Prostate gland (tissue), 2 donors: ENCODE measurements at regions of chr2 and their contacts with region 1.

Region 1: DNA sequence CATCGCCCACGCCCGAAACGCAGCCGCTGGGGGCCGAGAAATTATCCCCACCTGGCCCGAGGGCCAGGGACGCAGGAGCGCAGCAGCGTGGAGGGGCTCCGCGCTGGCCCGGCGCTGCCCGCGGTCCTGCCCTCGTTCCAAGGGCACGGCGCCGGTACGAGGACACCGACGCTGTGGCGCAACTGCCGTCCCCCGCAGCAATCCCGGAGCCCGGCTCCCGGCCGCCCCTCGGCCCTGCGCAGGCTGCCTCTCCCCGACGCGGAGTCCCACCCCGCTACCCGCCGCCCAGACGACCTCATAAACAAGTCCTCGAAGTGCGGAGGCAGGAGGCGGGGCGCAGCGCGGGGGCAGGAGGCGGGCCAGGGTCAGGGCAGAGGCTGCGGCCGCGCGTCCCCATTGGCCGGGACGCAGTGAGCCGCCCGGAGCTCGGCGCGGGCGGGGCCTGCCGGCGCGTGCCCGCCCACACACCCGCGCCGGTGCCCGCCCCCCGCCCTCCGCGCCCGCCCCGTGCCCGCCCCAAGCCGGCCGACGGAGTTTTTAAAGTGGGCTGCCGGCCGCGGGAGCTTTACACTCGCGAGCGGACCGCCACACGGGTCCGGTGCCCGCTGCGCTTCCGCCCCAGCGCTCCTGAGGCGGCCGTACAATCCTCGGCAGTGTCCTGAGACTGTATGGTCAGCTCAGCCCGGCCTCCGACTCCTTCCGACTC is at the start of gene EPAS1:
- DNase-seq: peak; percentile 86
- H3K4me3 ChIP-seq: peak within 1 kb of the TSS; percentile 65 to 67
- H3K27ac ChIP-seq: peak within 1 kb of the TSS; percentile 88 to 93
- H3K4me1 ChIP-seq: no peaks in the 10 kb centered on the region
- H3K27me3 ChIP-seq: no peaks in the 10 kb centered on the region
- CTCF ChIP-seq: no peak
- POLR2A ChIP-seq: peak; percentile 92
- total RNA-seq, gene EPAS1: 109 to 356 TPM

Region 2: GRCh38 chr2:46010925-46011490 is 286.0 kb before region 1 on chr2:
- intact Hi-C with region 1: loop called (anchors 5 kb)
- DNase-seq: no peak
- H3K4me3 ChIP-seq: no peak overlapping the region
- H3K27ac ChIP-seq: no peak overlapping the region
- H3K4me1 ChIP-seq: no peaks in the 10 kb centered on the region
- H3K27me3 ChIP-seq: no peaks in the 10 kb centered on the region
- CTCF ChIP-seq: peak; percentile 53 to 91 (median 78)
- POLR2A ChIP-seq: no peak

Region 3: GRCh38 chr2:46062637-46063412 is 234.2 kb before region 1 on chr2:
- intact Hi-C with region 1: loop called (anchors 5 kb)
- DNase-seq: peak; percentile 73
- H3K4me3 ChIP-seq: no peak overlapping the region
- H3K27ac ChIP-seq: no peak overlapping the region
- H3K4me1 ChIP-seq: peaks cover 12% of the 10 kb centered on the region
- H3K27me3 ChIP-seq: no peaks in the 10 kb centered on the region
- CTCF ChIP-seq: peak; percentile 46 to 85 (median 76)
- POLR2A ChIP-seq: no peak

Region 4: DNA sequence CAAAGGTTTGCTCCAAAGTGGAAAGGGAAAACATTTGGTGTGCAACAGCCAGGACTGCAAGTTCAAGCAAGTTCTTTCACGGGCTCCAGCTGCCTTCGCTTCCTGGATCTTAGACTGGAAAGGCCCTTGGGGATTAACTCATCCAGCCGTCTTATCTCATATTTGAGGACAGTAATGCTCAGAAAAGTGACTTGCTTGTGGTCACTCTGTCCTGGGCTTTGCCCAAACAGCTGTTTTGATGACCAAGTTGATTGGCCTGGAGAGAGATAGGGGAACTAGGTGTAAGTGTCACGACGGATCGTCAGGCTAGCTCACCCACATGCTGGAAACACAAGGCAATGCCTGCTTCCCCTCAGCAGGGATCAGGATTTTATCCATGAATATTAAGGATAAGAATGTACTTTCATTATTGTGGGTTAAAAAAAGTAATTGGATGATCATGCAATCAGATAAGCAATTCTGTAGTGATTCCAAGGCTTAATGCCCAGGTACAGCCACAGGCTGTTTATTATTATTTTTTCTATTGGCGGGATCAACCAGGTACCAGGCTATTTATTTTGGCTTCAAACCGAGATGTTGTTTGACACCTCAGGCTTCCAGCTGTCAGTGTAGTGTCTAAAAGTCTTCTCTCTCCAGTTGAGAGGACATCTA is 162.3 kb before region 1 on chr2:
- intact Hi-C with region 1: loop called (anchors 5 kb)
- DNase-seq: peak; percentile 68
- H3K4me3 ChIP-seq: no peak overlapping the region
- H3K27ac ChIP-seq: peak overlapping the region; percentile 56 to 71
- H3K4me1 ChIP-seq: peaks cover 9% of the 10 kb centered on the region
- H3K27me3 ChIP-seq: no peaks in the 10 kb centered on the region
- CTCF ChIP-seq: no peak
- POLR2A ChIP-seq: no peak

Region 5: GRCh38 chr2:46241344-46241743 is 55.6 kb before region 1 on chr2:
- intact Hi-C with region 1: no loop called
- DNase-seq: no peak
- H3K4me3 ChIP-seq: no peak overlapping the region
- H3K27ac ChIP-seq: no peak overlapping the region
- H3K4me1 ChIP-seq: no peaks in the 10 kb centered on the region
- H3K27me3 ChIP-seq: no peaks in the 10 kb centered on the region
- CTCF ChIP-seq: no peak
- POLR2A ChIP-seq: no peak

Region 6: DNA sequence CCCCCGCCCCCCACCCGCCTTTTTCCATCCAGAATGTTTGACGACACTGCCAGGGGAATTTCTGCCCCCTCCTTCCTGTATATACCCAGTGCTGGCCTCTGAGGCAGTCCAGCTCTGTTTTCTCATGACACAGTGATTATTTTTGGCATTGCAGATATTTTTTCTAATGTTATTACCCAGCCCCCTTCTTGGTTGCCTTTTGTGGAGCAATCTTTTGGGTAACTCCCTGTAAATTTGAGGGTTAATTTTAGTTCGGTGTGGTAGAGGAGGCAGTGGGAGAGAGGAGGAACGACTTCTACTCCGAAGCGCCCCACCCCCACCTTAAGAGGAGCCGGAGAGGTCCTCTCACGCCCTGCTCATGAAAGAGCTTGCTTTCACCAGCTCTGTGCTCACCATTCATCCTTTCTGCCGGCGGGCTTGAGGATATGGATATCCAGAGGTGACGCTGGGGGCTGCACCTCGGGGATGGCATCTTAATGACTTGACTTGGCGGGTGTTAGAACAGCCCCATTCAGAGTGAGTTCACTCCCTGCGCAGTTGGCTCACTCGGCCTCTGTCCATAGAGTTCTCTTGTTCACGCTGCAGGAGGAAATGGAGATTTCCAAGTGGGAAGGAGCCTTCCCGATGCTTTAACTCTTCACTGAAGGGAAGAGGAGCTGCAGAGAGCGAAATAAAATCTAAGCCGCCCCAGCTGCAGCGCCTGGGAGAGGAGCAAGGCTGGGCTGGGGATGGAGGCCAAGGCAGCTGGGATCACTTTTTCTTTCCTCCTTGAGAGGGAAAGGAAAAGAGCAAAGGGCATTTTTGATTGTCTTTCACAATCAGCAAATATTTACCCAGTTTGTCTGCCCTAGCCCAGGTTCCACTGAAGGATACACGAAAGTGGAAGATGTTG is 38.6 kb after region 1 on chr2:
- intact Hi-C with region 1: loop called (anchors 5 kb)
- DNase-seq: peak; percentile 17
- H3K4me3 ChIP-seq: peak overlapping the region in 1 of 2 donors; percentile 13
- H3K27ac ChIP-seq: peak overlapping the region; percentile 69 to 77
- H3K4me1 ChIP-seq: peaks cover 14% of the 10 kb centered on the region
- H3K27me3 ChIP-seq: no peaks in the 10 kb centered on the region
- CTCF ChIP-seq: no peak
- POLR2A ChIP-seq: no peak

Region 7: DNA sequence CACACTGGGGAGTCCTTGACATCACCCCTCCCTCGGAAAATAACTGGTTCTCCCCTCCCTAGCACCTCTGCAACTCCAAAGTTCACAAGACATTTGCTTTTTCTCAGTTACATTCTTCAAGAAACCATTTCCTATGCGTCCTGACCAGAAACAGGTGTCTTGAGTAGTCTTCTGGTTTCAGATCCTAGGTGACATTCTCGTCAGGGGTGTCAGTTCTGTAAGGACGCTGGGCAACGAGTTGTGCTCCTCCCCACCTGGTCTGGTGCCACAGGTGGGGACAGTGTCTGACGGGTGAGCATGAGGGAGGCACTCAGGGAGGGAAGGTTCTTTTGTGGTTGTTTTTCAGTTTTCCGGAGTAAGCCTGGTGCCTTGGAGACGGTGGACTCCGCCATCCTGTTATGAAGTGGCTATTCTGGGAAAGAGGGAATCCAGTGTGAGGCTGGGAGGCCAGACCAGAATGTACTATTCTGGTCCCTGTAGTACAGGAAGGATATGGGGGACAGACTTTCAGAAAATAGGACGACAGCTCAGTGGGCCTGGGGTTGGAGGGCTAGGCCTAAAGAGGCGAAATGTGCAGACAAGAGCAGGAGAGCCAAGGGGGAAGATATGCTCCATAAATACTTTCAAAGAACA is 50.8 kb after region 1 on chr2:
- intact Hi-C with region 1: loop called (anchors 5 kb)
- DNase-seq: no peak
- H3K4me3 ChIP-seq: no peak overlapping the region
- H3K27ac ChIP-seq: no peak overlapping the region
- H3K4me1 ChIP-seq: no peaks in the 10 kb centered on the region
- H3K27me3 ChIP-seq: no peaks in the 10 kb centered on the region
- CTCF ChIP-seq: no peak
- POLR2A ChIP-seq: no peak

Region 8: DNA sequence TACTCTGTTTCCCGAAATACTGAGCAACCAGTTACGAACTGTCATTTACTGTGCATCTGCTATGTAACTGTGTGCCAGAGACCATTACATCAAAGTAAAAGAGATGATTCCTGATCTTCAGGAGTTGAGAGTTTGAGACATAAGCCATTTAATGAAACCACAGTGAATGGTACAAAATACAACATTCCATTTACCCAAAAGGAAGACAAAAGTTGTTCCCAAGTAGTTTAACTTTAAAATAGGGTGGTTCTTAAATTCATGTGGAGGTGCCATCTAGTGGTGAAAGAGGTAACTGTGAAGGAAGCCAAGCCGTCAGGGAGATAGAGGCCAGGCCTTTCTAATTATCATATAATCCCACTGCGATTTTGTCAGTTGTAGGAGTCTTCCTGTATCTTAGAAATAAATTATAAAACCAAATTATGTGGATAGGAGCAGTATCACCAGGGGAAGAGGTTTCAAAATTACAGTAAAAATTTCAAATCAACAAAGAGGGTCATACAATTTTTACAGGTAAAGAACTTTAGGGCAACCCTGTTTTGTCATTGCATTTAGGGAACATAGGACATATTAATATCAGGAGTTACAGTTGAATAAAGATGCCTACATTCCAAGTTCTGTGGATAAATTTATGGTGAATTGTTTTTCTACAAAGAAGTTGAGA is 67.9 kb after region 1 on chr2:
- intact Hi-C with region 1: loop called (anchors 5 kb)
- DNase-seq: peak; percentile 29
- H3K4me3 ChIP-seq: no peak overlapping the region
- H3K27ac ChIP-seq: no peak overlapping the region
- H3K4me1 ChIP-seq: peaks cover 4% of the 10 kb centered on the region
- H3K27me3 ChIP-seq: no peaks in the 10 kb centered on the region
- CTCF ChIP-seq: peak; percentile 49 to 76 (median 70)
- POLR2A ChIP-seq: no peak

Region 9: GRCh38 chr2:47272031-47272864 is 975.3 kb after region 1 on chr2:
- intact Hi-C with region 1: no loop called
- DNase-seq: peak; percentile 33
- H3K4me3 ChIP-seq: peak overlapping the region; percentile 8 to 10
- H3K27ac ChIP-seq: peak overlapping the region in 1 of 2 donors; percentile 10
- H3K4me1 ChIP-seq: no peaks in the 10 kb centered on the region
- H3K27me3 ChIP-seq: no peaks in the 10 kb centered on the region
- CTCF ChIP-seq: peak; percentile 94 to 97 (median 96)
- POLR2A ChIP-seq: no peak

Region 10: GRCh38 chr2:47601568-47601967 is 1304.6 kb after region 1 on chr2:
- intact Hi-C with region 1: no loop called
- DNase-seq: no peak
- H3K4me3 ChIP-seq: no peak overlapping the region
- H3K27ac ChIP-seq: no peak overlapping the region
- H3K4me1 ChIP-seq: no peaks in the 10 kb centered on the region
- H3K27me3 ChIP-seq: no peaks in the 10 kb centered on the region
- CTCF ChIP-seq: no peak
- POLR2A ChIP-seq: no peak